Dendritic cell treated with granulocyte-macrophage colony-stimulating factor and Interleukin-4, amounts not matched to agents 40 ng/mL and 50 ng/mL, for 4 days (primary cell): ENCODE measurements at regions of chr14 and their contacts with region 1.

Region 1: GRCh38 chr14:44961604-44962333 is at the starts of genes KLHL28 and TOGARAM1:
- H3K4me3 Mint-ChIP-seq: no peak within 1 kb of the TSS
- H3K27ac Mint-ChIP-seq: no peak within 1 kb of the TSS
- H3K4me1 Mint-ChIP-seq: peaks cover 43% of the 10 kb centered on the region
- H3K27me3 Mint-ChIP-seq: no peaks in the 10 kb centered on the region

Region 2: DNA sequence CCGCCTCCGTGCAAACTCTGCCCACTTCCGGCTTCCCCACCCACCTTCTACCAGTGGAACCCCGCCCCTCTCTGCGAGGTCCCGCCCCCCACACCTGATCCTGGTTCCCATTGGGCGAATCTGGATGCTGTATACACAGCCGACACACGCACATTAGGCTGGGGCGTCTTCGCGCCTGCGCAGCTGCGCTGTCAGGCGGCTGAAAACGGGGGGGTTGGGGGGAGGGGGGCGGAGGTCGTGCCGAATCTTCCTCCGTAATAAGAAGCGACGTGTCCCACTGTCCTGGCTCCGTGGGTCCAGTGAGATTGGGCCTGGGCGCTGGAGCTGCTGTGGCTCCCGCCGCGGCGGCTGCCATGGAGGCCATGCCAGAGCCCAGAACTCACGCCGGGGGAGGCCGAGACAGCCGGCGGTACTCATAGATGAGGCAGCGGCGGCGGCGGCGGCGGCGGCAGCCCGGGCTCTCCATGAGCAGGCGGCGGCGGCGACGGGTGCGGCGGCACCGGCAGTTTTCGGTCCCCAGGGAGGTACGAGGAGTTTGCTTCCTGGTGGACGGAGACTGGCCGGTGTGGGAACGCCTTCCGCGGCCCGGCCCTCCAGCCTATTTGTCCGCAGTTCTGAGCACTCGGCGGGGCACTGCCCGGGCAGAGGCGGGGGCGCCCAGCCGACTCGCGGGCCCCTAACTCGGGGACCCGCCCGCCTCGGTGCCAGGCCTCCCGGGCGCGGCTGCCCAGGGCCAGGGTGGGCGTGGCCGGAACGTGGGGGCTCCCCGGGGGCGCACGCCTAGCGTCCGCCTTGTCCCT is 64.5 kb before region 1 on chr14:
- intact Hi-C with region 1: loop called (anchors 1 kb)
- H3K4me3 Mint-ChIP-seq: peak overlapping the region; percentile 93
- H3K27ac Mint-ChIP-seq: peak overlapping the region; percentile 93
- H3K4me1 Mint-ChIP-seq: peaks cover 14% of the 10 kb centered on the region
- H3K27me3 Mint-ChIP-seq: no peaks in the 10 kb centered on the region

Region 3: GRCh38 chr14:44912041-44912869 is 49.5 kb before region 1 on chr14:
- intact Hi-C with region 1: no loop called
- H3K4me3 Mint-ChIP-seq: peak overlapping the region; percentile 41
- H3K27ac Mint-ChIP-seq: no peak overlapping the region
- H3K4me1 Mint-ChIP-seq: no peaks in the 10 kb centered on the region
- H3K27me3 Mint-ChIP-seq: peaks cover 48% of the 10 kb centered on the region

Region 4: DNA sequence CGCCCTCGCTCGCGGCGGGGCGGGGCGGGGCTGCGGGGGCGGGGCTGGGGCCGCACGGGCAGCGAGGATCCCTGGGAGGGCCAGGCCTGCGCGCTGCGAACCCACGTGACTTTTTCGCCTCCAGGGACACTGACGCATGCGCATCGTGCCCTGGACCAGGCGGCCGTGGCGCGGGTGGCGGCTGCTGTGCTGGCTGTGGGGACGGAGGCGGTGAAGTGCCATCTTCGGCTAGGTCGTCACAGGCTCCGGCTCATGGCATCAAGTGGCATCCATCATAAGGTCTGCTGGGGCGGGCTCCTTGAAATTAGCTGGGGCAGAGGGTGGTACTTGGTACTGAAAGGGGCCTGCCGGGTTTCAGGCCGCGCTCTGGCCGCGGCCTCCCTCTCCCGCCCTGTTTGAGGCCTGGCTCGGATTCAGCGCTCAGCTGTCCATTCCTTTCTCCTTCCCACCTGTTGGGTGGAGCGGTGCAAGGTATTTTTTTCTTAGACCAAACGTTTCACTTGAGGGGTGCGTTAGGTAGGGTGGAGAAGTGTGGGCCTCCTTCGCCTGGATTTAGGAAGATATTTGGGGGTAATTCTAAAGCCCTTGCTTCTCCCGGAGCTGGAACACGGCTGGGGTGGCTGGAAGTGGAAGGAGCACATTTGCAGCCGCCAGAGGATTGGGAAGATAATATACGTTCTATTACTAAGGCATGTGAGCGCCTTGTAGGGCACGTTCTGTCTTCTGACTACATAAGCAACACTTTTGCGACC is 122.4 kb after region 1 on chr14 and contains the start of gene PRPF39:
- intact Hi-C with region 1: loop called (anchors 2 kb)
- H3K4me3 Mint-ChIP-seq: peak within 1 kb of the TSS; percentile 97
- H3K27ac Mint-ChIP-seq: peak within 1 kb of the TSS; percentile 96
- H3K4me1 Mint-ChIP-seq: peaks cover 39% of the 10 kb centered on the region
- H3K27me3 Mint-ChIP-seq: peaks cover 9% of the 10 kb centered on the region